ENCODE measurements at regions of chr4 and their contacts with region 1.

Region 1: GRCh38 chr4:4488405-4489404 is 53.1 kb downstream of the STX18 start:
- DNase-seq: peak; percentile 48 to 81 (median 64)
- H3K4me3 ChIP-seq: no peak overlapping the region
- H3K27ac ChIP-seq: no peak overlapping the region
- H3K27me3 ChIP-seq: no peaks in the 10 kb centered on the region
- CTCF ChIP-seq: peak; percentile 62 to 96 (median 89)

Region 2: GRCh38 chr4:4256799-4257198 is 231.9 kb before region 1 on chr4:
- intact Hi-C with region 1: loop called in 1 of 2 experiments (anchors 10 kb)
- DNase-seq: no peak
- H3K4me3 ChIP-seq: no peak overlapping the region
- H3K27ac ChIP-seq: peak overlapping the region in 6 of 59 donors; percentile 22 to 99 (median 66)
- H3K27me3 ChIP-seq: no peaks in the 10 kb centered on the region
- CTCF ChIP-seq: no peak

Region 3: GRCh38 chr4:4677556-4678522 is 189.1 kb after region 1 on chr4:
- intact Hi-C with region 1: loop called in 1 of 2 experiments (anchors 10 kb)
- DNase-seq: peak in 2 of 10 donors; percentile 41 to 46
- H3K4me3 ChIP-seq: peak overlapping the region in 41 of 59 donors; percentile 2 to 55 (median 28)
- H3K27ac ChIP-seq: no peak overlapping the region
- H3K27me3 ChIP-seq: no peaks in the 10 kb centered on the region
- CTCF ChIP-seq: peak in 55 of 56 donors; percentile 40 to 76 (median 60)

Region 4: DNA sequence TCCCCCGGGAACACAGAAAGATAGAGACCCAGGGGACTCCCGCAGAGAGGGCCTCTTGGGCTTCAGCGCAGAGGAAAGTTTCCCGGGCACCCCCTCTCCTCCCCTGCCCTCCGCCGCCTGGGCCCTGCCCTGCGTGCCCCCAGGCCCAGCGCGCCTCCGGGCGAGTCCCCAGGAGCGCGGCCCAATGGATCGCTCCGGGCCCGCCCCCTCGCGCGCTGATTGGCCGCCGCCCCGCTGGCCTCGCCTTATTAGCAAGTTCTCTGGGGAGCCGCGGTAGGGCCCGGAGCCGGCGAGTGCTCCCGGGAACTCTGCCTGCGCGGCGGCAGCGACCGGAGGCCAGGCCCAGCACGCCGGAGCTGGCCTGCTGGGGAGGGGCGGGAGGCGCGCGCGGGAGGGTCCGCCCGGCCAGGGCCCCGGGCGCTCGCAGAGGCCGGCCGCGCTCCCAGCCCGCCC is 370.7 kb after region 1 on chr4 and contains the start of gene MSX1:
- intact Hi-C with region 1: loop called (anchors 10 kb)
- DNase-seq: peak; percentile 52 to 87 (median 78)
- H3K4me3 ChIP-seq: peak within 1 kb of the TSS; percentile 50 to 81 (median 67)
- H3K27ac ChIP-seq: peak within 1 kb of the TSS in 39 of 59 donors; percentile 2 to 88 (median 59)
- H3K27me3 ChIP-seq: peaks cover 10 to 100% (median 91%) of the 10 kb centered on the region in 45 donors
- CTCF ChIP-seq: peak in 2 of 56 donors; percentile 13 to 20
- total RNA-seq, gene MSX1: 1.9 to 28.3 (median 6.8) TPM

Region 5: GRCh38 chr4:4995103-4995907 is 506.6 kb after region 1 on chr4:
- intact Hi-C with region 1: loop called in 1 of 2 experiments (anchors 10 kb)
- DNase-seq: peak in 9 of 10 donors; percentile 33 to 75 (median 61)
- H3K4me3 ChIP-seq: no peak overlapping the region
- H3K27ac ChIP-seq: no peak overlapping the region
- H3K27me3 ChIP-seq: peaks cover 0 to 8% (median 0%) of the 10 kb centered on the region in 45 donors
- CTCF ChIP-seq: peak; percentile 63 to 94 (median 85)

Region 6: GRCh38 chr4:5206016-5206790 is 717.5 kb after region 1 on chr4:
- intact Hi-C with region 1: loop called in 1 of 2 experiments (anchors 10 kb)
- DNase-seq: peak; percentile 14 to 91 (median 79)
- H3K4me3 ChIP-seq: no peak overlapping the region
- H3K27ac ChIP-seq: peak overlapping the region in 51 of 59 donors; percentile 13 to 89 (median 68)
- H3K27me3 ChIP-seq: no peaks in the 10 kb centered on the region
- CTCF ChIP-seq: peak in 6 of 56 donors; percentile 6 to 22 (median 10)

Region 7: DNA sequence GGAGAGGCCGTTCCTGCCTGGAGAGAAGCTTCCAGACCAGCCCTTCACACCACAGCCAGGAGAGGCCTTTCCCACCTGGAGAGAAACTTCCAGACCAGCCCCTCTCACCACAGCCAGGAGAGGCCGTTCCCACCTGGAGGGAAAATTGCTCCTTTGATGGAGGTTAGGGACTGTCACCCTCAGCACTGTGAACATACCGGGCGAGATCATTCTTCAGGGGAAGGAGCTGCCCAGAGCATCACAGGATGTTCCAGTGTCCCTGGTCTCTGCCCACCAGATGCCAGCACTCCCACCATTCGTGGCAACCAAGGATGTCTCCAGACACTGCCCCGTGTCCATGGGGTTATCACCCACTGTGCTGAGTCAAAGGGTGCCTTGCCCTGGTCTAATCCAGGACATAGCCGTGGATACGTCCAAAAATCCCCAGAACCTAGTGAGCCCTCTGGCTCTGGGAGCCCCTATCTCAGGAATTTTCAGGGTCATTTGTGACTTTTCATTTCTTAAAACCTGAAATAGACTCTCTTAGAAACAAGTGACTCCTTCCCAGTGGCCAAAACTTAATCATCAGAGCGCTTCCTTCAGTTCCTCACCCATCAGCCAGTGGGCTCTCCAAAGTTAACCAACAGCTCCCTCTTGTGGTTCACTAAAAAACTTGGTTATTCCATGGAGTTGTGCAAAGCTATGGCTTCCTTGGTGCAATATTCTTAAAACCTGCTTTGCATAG is 1324.0 kb after region 1 on chr4:
- intact Hi-C with region 1: loop called in 1 of 2 experiments (anchors 10 kb)
- DNase-seq: peak in 2 of 10 donors; percentile 23 to 27
- H3K4me3 ChIP-seq: no peak overlapping the region
- H3K27ac ChIP-seq: no peak overlapping the region
- H3K27me3 ChIP-seq: no peaks in the 10 kb centered on the region
- CTCF ChIP-seq: peak; percentile 52 to 84 (median 77)

Measured in dorsolateral prefrontal cortex (tissue), 120 donors.